ENCODE measurements at regions of chr7 and their contacts with region 1.

Region 1: DNA sequence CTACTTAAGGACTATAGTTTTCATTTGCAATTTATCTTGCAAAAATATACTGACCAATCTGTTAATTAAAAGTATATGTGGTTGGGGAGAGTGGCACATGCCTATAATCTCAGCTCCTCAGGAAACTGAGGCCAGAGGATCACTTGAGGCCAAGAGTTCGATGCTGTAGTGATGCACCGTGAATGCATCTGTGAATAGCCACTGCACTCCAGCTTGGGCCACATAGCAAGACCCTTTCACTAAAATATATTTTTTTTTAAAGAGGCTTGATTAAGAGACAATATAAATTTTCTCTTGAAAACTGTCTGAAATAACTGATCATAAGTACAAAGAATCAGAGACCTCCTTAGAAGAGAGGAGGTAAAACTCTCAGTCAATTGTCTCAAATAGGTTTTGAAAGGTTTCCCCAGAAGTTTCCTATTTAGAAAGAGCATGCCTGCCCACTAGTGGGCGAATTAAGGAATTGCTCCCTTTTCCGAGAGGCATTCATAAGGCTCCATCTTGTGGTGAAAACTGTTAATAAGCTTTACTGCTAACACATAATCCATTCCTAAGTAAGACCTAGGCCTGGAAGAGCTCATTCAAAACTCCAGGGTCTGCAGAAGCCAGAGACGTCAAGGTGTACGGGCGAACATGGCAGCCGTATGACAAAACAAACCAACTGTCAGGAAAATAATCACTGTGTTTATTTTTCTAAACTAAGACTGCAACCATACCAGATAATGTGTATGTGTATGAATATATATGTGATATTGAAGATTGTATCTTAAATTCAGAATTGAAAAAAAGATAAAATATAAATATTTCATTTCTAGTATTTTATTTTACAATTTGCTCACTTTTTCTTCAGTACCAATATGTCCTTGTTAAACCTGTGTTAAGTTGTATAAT is 6.8 kb upstream of the TAS2R40 start:
- DNase-seq: peak; percentile 90
- H3K4me3 ChIP-seq: no peak overlapping the region
- H3K27ac ChIP-seq: no peak overlapping the region
- H3K4me1 ChIP-seq: no peaks in the 10 kb centered on the region
- H3K27me3 ChIP-seq: peaks cover 3 to 5% of the 10 kb centered on the region in 2 experiments
- CTCF ChIP-seq: peak; percentile 95 to 99
- POLR2A ChIP-seq: no peak

Region 2: GRCh38 chr7:142853739-142854371 is 361.2 kb before region 1 on chr7:
- CTCF ChIA-PET with region 1: interaction called, 22 read pairs
- POLR2A ChIA-PET with region 1: no interaction called
- dilution Hi-C with region 1: no loop called
- intact Hi-C with region 1: loop called (anchors 1 kb)
- DNase-seq: peak; percentile 77
- H3K4me3 ChIP-seq: peak overlapping the region; percentile 48 to 73 (median 65)
- H3K27ac ChIP-seq: no peak overlapping the region
- H3K4me1 ChIP-seq: peaks cover 3% of the 10 kb centered on the region
- H3K27me3 ChIP-seq: peaks cover 7 to 10% of the 10 kb centered on the region in 2 experiments
- CTCF ChIP-seq: peak; percentile 67 to 87
- POLR2A ChIP-seq: no peak

Region 3: GRCh38 chr7:142908921-142909890 is 305.8 kb before region 1 on chr7:
- CTCF ChIA-PET with region 1: interaction called, 10 read pairs
- POLR2A ChIA-PET with region 1: no interaction called
- dilution Hi-C with region 1: no loop called
- intact Hi-C with region 1: no loop called
- DNase-seq: no peak
- H3K4me3 ChIP-seq: no peak overlapping the region
- H3K27ac ChIP-seq: no peak overlapping the region
- H3K4me1 ChIP-seq: no peaks in the 10 kb centered on the region
- H3K27me3 ChIP-seq: no peaks in the 10 kb centered on the region
- CTCF ChIP-seq: peak in 1 of 2 donors; percentile 26
- POLR2A ChIP-seq: no peak

Region 4: GRCh38 chr7:143042159-143042789 is 172.8 kb before region 1 on chr7:
- CTCF ChIA-PET with region 1: interaction called, 10 read pairs
- POLR2A ChIA-PET with region 1: no interaction called
- dilution Hi-C with region 1: no loop called
- intact Hi-C with region 1: no loop called
- DNase-seq: no peak
- H3K4me3 ChIP-seq: no peak overlapping the region
- H3K27ac ChIP-seq: no peak overlapping the region
- H3K4me1 ChIP-seq: no peaks in the 10 kb centered on the region
- H3K27me3 ChIP-seq: peaks cover 2% of the 10 kb centered on the region in 2 experiments
- CTCF ChIP-seq: no peak
- POLR2A ChIP-seq: no peak

Region 5: DNA sequence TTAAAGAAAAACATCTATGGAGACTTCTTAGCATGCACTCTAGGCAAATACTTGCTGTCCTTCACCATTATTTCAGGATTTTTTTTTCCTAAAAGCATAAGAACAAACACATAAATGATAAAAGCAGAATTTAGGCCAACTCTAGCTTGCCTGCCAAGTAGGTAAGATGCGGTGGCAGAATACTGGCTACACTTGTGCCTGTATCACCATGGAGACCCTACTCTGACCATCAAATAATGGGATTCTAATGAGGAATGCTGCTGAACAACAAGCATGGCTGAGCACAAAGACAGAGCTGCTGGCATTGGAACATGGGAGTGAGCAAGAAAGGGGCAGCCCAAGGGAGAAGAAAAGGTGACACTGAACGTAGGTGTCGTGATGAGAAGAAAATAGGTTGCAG is 11.6 kb before region 1 on chr7:
- CTCF ChIA-PET with region 1: interaction called, 28 read pairs
- POLR2A ChIA-PET with region 1: no interaction called
- dilution Hi-C with region 1: no loop called
- intact Hi-C with region 1: no loop called
- DNase-seq: no peak
- H3K4me3 ChIP-seq: no peak overlapping the region
- H3K27ac ChIP-seq: no peak overlapping the region
- H3K4me1 ChIP-seq: no peaks in the 10 kb centered on the region
- H3K27me3 ChIP-seq: peaks cover 5 to 12% of the 10 kb centered on the region in 2 experiments
- CTCF ChIP-seq: no peak
- POLR2A ChIP-seq: no peak